ENCODE measurements at regions of chr18 and their contacts with region 1.

Region 1: GRCh38 chr18:76709659-76710645 is 112.4 kb upstream of the ZNF236 start:
- DNase-seq: peak; percentile 74
- ATAC-seq: peak; percentile 88
- H3K4me3 Mint-ChIP-seq: no peak overlapping the region
- H3K27ac Mint-ChIP-seq: no peak overlapping the region
- H3K4me1 Mint-ChIP-seq: peaks cover 15% of the 10 kb centered on the region
- H3K27me3 Mint-ChIP-seq: peaks cover 10% of the 10 kb centered on the region

Region 2: GRCh38 chr18:76721207-76721996 is 11.4 kb after region 1 on chr18:
- CTCF ChIA-PET with region 1: interaction called, 31 read pairs
- POLR2A ChIA-PET with region 1: no interaction called
- DNase-seq: peak; percentile 94
- ATAC-seq: peak; percentile 98
- H3K4me3 Mint-ChIP-seq: peak overlapping the region; percentile 59
- H3K27ac Mint-ChIP-seq: peak overlapping the region; percentile 88
- H3K4me1 Mint-ChIP-seq: peaks cover 42% of the 10 kb centered on the region
- H3K27me3 Mint-ChIP-seq: peaks cover 31% of the 10 kb centered on the region